Endothelial cell of umbilical vein (primary cell): ENCODE measurements at regions of chr2 and their contacts with region 1.

Region 1: GRCh38 chr2:7427293-7428060 is 510.3 kb downstream of the RNF144A start:
- DNase-seq: peak; percentile 54
- H3K4me3 ChIP-seq: no peak overlapping the region
- H3K27ac ChIP-seq: no peak overlapping the region
- H3K4me1 ChIP-seq: no peaks in the 10 kb centered on the region
- H3K27me3 ChIP-seq: no peaks in the 10 kb centered on the region
- CTCF ChIP-seq: peak; percentile 45
- POLR2A ChIP-seq: no peak

Region 2: DNA sequence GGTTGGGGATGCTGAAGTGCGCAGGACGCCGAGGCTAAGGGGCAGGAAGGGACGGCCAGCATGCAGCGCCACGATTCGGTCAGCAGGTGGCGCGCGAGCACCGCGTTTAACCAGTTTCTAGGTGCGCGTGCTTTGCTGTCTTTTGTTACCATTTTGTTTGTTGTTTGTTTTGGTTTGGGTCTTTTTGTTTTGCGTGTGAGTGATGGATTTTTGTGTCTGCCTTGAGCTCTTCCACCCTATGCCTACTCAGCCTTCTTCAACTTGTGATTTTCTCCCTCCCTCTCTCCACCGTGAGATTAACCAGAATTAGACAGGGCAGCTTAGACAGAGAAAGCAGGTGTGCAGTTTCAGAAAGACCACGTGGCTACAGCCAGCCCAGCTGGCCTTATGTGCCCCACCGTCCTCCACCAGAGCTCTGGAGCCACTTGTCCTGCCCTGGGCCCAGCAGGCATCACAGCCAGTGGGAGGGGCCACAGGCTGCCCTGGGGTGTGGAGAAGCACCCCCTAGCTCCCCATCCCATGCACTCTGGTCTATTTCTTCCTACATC is 330.1 kb before region 1 on chr2:
- CTCF ChIA-PET with region 1: interaction called, 15 read pairs
- POLR2A ChIA-PET with region 1: no interaction called
- dilution Hi-C with region 1: no loop called
- intact Hi-C with region 1: loop called (anchors 1 kb)
- DNase-seq: peak; percentile 57
- H3K4me3 ChIP-seq: no peak overlapping the region
- H3K27ac ChIP-seq: no peak overlapping the region
- H3K4me1 ChIP-seq: no peaks in the 10 kb centered on the region
- H3K27me3 ChIP-seq: no peaks in the 10 kb centered on the region
- CTCF ChIP-seq: peak; percentile 94 to 99
- POLR2A ChIP-seq: no peak

Region 3: DNA sequence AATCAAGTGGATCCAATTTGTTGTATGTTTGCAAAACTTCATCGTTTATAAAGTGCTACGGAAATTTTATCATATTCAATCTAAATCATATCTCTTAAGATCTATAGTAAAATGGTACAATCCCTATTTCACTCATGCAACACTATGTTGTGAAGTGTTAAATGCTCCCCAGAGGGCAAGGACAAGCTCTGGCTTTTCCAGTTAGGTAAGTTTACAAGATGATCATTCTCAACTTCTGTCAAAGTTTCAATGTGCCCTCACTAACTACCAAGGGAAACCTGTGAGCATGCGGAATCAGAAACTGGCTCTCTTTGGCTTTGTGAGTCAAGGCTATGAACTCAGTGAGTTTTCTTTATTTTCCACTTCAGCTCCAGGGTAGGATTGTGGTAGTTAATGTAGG is 23.6 kb before region 1 on chr2:
- CTCF ChIA-PET with region 1: interaction called, 3 read pairs
- POLR2A ChIA-PET with region 1: no interaction called
- dilution Hi-C with region 1: no loop called
- intact Hi-C with region 1: loop called (anchors 1 kb)
- DNase-seq: no peak
- H3K4me3 ChIP-seq: no peak overlapping the region
- H3K27ac ChIP-seq: no peak overlapping the region
- H3K4me1 ChIP-seq: no peaks in the 10 kb centered on the region
- H3K27me3 ChIP-seq: no peaks in the 10 kb centered on the region
- CTCF ChIP-seq: no peak
- POLR2A ChIP-seq: no peak

Region 4: GRCh38 chr2:7809640-7810039 is 382.2 kb after region 1 on chr2:
- CTCF ChIA-PET with region 1: no interaction called
- POLR2A ChIA-PET with region 1: no interaction called
- dilution Hi-C with region 1: no loop called
- intact Hi-C with region 1: no loop called
- DNase-seq: no peak
- H3K4me3 ChIP-seq: no peak overlapping the region
- H3K27ac ChIP-seq: no peak overlapping the region
- H3K4me1 ChIP-seq: no peaks in the 10 kb centered on the region
- H3K27me3 ChIP-seq: no peaks in the 10 kb centered on the region
- CTCF ChIP-seq: no peak
- POLR2A ChIP-seq: no peak

Region 5: DNA sequence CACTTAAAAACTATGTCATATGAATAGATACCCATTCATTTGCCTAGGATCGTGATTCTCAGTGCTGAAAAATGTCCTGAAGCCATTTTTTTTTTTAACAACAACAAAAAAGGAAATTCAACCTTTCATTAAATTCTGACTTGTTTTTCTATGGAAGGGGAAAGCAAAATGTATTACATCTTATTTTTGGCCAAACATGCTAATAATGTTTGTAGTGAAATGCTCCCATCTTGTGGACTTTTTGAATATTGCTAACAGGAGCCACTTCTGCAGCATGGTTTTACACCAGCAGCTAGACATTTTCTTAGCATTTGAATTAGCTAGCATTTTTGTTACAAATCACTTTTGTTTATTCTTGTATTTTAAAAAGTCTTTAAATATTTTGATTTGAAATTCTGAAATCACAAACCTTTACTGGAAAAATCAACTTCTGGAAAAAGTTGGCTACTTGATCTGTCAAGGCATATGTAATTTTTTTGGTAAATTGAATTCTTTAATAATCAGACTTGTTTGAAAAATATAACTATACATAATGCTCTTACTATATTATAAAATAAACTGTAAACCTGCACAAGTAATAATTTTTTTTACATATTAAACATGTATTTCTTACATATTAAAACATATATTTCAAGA is 1334.2 kb after region 1 on chr2:
- CTCF ChIA-PET with region 1: interaction called, 6 read pairs
- POLR2A ChIA-PET with region 1: no interaction called
- dilution Hi-C with region 1: no loop called
- intact Hi-C with region 1: loop called (anchors 5 kb)
- DNase-seq: peak; percentile 47
- H3K4me3 ChIP-seq: no peak overlapping the region
- H3K27ac ChIP-seq: no peak overlapping the region
- H3K4me1 ChIP-seq: no peaks in the 10 kb centered on the region
- H3K27me3 ChIP-seq: no peaks in the 10 kb centered on the region
- CTCF ChIP-seq: peak in 1 of 2 donors; percentile 21
- POLR2A ChIP-seq: no peak